IMR-90 (cell line): ENCODE measurements at regions of chrX and their contacts with region 1.

Region 1: GRCh38 chrX:46408553-46409407 is 136.4 kb downstream of the ZNF674 start:
- DNase-seq: peak; percentile 76
- ATAC-seq: peak; percentile 83
- H3K4me3 ChIP-seq: no peak overlapping the region
- H3K27ac ChIP-seq: no peak overlapping the region
- H3K4me1 ChIP-seq: no peaks in the 10 kb centered on the region
- H3K27me3 ChIP-seq: peaks cover 2% of the 10 kb centered on the region; the same call in 1 of the 2 replicates
- CTCF ChIP-seq: peak; percentile 94
- POLR2A ChIP-seq: no peak
- RAD21 ChIP-seq: peak; percentile 92

Region 2: DNA sequence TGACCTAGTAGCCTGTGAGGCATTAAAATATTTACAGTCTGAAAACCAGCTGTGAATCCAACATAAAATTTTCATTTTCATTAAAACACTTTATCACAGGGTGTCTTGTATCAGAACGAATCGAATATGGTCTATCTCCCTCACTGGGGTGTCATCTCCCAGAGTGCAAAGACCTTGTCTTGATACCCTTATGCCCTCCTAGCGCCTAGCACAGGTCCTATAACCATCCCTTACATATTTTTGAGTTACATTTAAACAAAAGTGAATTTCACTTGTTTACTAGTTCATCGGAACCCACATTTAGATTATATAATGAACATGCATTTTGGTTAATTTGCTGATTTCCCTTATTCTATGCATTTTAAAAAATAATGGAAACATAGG is 1222.1 kb before region 1 on chrX:
- CTCF ChIA-PET with region 1: no interaction called
- POLR2A ChIA-PET with region 1: no interaction called
- dilution Hi-C with region 1: no loop called
- in situ Hi-C with region 1: no loop called
- intact Hi-C with region 1: loop called (anchors 10 kb)
- DNase-seq: no peak
- ATAC-seq: no peak; the same call in 1 of the 2 replicates
- H3K4me3 ChIP-seq: no peak overlapping the region
- H3K27ac ChIP-seq: no peak overlapping the region
- H3K4me1 ChIP-seq: no peaks in the 10 kb centered on the region
- H3K27me3 ChIP-seq: peaks cover 10% of the 10 kb centered on the region
- CTCF ChIP-seq: no peak
- POLR2A ChIP-seq: no peak
- RAD21 ChIP-seq: no peak

Region 3: GRCh38 chrX:45824471-45824870 is 584.3 kb before region 1 on chrX:
- CTCF ChIA-PET with region 1: no interaction called
- POLR2A ChIA-PET with region 1: no interaction called
- dilution Hi-C with region 1: no loop called
- in situ Hi-C with region 1: no loop called
- intact Hi-C with region 1: loop called (anchors 2 kb)
- DNase-seq: peak; percentile 96
- ATAC-seq: peak; percentile 92
- H3K4me3 ChIP-seq: no peak overlapping the region
- H3K27ac ChIP-seq: no peak overlapping the region
- H3K4me1 ChIP-seq: no peaks in the 10 kb centered on the region
- H3K27me3 ChIP-seq: peaks cover 2% of the 10 kb centered on the region; the same call in 1 of the 2 replicates
- CTCF ChIP-seq: peak; percentile 81
- POLR2A ChIP-seq: no peak
- RAD21 ChIP-seq: peak; percentile 81

Region 4: DNA sequence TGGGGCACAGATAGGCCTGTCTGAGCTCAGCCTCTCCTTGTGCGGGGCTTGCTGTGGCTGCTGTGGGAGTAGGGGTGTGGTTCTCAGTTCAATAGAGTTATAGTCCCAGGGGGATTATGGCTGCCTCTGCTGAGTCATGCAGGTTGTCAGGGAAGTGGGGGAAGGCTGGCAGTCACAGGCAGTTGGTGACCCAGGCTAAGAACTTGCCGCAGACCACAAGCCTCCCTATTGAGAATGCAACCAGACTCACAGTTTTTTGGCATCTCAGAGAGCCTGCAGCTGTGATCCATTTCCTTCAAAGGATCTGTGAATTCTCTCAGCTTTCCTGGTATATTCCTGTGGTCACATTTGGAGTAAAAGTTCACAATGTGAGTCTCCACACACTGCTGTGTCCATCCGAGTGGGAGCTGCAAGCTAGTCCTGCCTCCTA is 228.5 kb before region 1 on chrX:
- CTCF ChIA-PET with region 1: no interaction called
- POLR2A ChIA-PET with region 1: no interaction called
- dilution Hi-C with region 1: no loop called
- in situ Hi-C with region 1: no loop called
- intact Hi-C with region 1: no loop called
- DNase-seq: peak; percentile 47
- ATAC-seq: no peak
- H3K4me3 ChIP-seq: no peak overlapping the region
- H3K27ac ChIP-seq: no peak overlapping the region
- H3K4me1 ChIP-seq: no peaks in the 10 kb centered on the region
- H3K27me3 ChIP-seq: no peaks in the 10 kb centered on the region; the same call in 1 of the 2 replicates
- CTCF ChIP-seq: no peak
- POLR2A ChIP-seq: no peak
- RAD21 ChIP-seq: no peak

Region 5: GRCh38 chrX:46340696-46341095 is 68.1 kb before region 1 on chrX:
- CTCF ChIA-PET with region 1: no interaction called
- POLR2A ChIA-PET with region 1: no interaction called
- dilution Hi-C with region 1: no loop called
- in situ Hi-C with region 1: loop called (anchors 10 kb)
- intact Hi-C with region 1: no loop called
- DNase-seq: no peak
- ATAC-seq: no peak
- H3K4me3 ChIP-seq: no peak overlapping the region
- H3K27ac ChIP-seq: no peak overlapping the region
- H3K4me1 ChIP-seq: no peaks in the 10 kb centered on the region
- H3K27me3 ChIP-seq: peaks cover 16% of the 10 kb centered on the region
- CTCF ChIP-seq: no peak
- POLR2A ChIP-seq: no peak
- RAD21 ChIP-seq: no peak

Region 6: DNA sequence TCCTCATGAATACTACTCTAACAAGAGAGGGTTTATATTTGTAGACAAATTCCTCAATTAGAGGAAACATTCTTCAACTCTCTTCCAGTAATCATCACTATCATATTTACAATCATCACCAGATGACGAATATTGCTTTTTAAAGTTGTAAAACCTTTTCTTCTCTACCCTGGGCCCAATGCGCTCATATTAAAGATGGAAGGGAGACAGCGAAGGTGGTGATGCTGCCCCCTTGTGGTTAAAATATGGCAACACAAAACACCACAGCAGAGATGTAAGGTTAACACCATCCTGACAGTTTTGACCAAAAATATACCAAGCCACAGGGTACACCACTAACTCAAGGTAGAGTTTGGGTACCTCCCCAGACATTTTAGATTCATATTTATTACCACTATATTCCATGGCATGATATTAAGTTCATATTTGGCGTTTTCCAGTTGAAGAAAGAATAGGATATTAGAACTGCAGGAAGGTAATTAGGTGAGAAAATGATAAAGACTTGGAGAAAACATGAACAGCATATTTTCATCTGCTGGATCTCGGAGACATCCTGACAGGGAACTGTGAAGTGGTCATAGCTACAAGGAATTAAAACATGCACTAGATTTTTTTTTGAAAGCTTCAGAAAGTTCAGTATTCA is 277.3 kb after region 1 on chrX:
- CTCF ChIA-PET with region 1: no interaction called
- POLR2A ChIA-PET with region 1: no interaction called
- dilution Hi-C with region 1: no loop called
- in situ Hi-C with region 1: no loop called
- intact Hi-C with region 1: loop called (anchors 5 kb)
- DNase-seq: peak; percentile 41
- ATAC-seq: peak; percentile 80
- H3K4me3 ChIP-seq: no peak overlapping the region
- H3K27ac ChIP-seq: no peak overlapping the region
- H3K4me1 ChIP-seq: peaks cover 5% of the 10 kb centered on the region; the same call in 1 of the 2 replicates
- H3K27me3 ChIP-seq: peaks cover 4% of the 10 kb centered on the region; the same call in 1 of the 2 replicates
- CTCF ChIP-seq: peak; percentile 61
- POLR2A ChIP-seq: no peak
- RAD21 ChIP-seq: peak; percentile 57